Mammary epithelial cell (primary cell): ENCODE measurements at regions of chr19 and their contacts with region 1.

Region 1: DNA sequence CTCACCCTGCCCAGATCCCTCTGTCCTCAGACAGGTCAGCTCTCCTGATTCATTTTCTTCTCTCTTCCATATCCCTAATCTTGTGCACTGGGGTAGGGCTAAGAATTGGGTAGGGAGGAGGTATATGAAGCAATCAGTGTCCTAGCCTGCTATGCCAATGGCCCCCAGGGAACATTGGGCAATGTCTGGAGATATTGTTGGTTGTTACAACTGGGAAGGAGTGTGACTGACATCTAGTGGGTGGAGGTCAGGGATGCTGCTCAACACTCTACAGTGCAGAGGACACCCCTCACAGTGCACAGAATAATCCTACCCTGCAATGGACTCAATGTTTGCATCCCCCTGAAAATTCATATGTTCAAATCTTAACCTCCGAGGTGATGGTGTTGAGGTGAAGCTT is 57.5 kb downstream of the CPAMD8 start:
- DNase-seq: peak; percentile 45
- H3K4me3 ChIP-seq: no peak overlapping the region
- H3K27ac ChIP-seq: no peak overlapping the region
- H3K4me1 ChIP-seq: no peaks in the 10 kb centered on the region
- H3K27me3 ChIP-seq: no peaks in the 10 kb centered on the region
- CTCF ChIP-seq: peak; percentile 46 to 80

Region 2: DNA sequence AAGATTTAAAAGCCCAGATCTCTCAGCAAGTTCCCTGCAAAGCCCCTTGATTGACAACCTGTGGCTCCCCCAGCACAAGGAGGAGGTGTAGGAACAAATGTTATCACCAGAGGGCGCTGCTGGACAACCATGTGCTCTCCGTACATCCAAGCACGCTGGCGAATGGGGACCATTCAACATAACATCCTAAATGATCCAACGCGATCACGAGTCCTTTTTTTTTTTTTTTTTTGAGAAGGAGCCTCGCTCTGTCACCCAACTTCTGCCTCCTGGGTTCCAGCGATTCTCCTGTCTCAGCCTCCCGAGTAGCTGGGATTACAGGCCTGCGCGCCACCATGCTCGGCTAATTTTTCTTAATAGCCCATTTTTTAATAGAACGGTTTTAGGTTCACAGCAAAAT is 197.5 kb before region 1 on chr19:
- CTCF ChIA-PET with region 1: no interaction called
- dilution Hi-C with region 1: no loop called
- in situ Hi-C with region 1: no loop called
- intact Hi-C with region 1: loop called (anchors 1 kb)
- DNase-seq: peak; percentile 55
- H3K4me3 ChIP-seq: no peak overlapping the region
- H3K27ac ChIP-seq: no peak overlapping the region
- H3K4me1 ChIP-seq: peaks cover 3% of the 10 kb centered on the region
- H3K27me3 ChIP-seq: no peaks in the 10 kb centered on the region
- CTCF ChIP-seq: peak; percentile 81 to 86

Region 3: GRCh38 chr19:16778796-16779411 is 190.2 kb before region 1 on chr19:
- CTCF ChIA-PET with region 1: no interaction called
- dilution Hi-C with region 1: no loop called
- in situ Hi-C with region 1: no loop called
- intact Hi-C with region 1: loop called (anchors 1 kb)
- DNase-seq: peak; percentile 40
- H3K4me3 ChIP-seq: no peak overlapping the region
- H3K27ac ChIP-seq: no peak overlapping the region
- H3K4me1 ChIP-seq: no peaks in the 10 kb centered on the region
- H3K27me3 ChIP-seq: no peaks in the 10 kb centered on the region
- CTCF ChIP-seq: peak; percentile 58 to 87

Region 4: GRCh38 chr19:16791960-16792359 is 177.2 kb before region 1 on chr19:
- CTCF ChIA-PET with region 1: no interaction called
- dilution Hi-C with region 1: loop called (anchors 5 kb)
- in situ Hi-C with region 1: no loop called
- intact Hi-C with region 1: no loop called
- DNase-seq: no peak
- H3K4me3 ChIP-seq: no peak overlapping the region
- H3K27ac ChIP-seq: no peak overlapping the region
- H3K4me1 ChIP-seq: no peaks in the 10 kb centered on the region
- H3K27me3 ChIP-seq: no peaks in the 10 kb centered on the region
- CTCF ChIP-seq: no peak

Region 5: DNA sequence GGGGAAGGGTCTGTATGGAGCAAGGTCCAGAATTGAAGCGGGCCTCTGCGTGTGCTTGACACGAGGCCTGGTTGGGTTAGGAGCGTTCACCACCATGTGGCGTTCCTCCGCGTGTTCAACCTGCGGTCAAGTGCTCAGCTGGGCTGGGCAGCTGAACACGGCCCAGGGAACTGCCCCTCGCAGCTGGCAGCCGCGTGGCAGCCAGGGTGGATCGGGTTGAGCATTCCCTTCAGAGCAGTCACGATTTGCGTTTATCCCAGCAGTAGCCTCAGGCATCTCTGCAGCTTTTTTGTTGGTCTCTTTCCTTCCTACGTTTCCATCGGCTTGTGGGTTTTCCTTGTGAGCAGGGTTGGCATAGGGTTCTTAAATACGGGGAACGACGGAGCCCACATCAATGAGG is 109.0 kb before region 1 on chr19:
- CTCF ChIA-PET with region 1: no interaction called
- dilution Hi-C with region 1: loop called (anchors 5 kb)
- in situ Hi-C with region 1: no loop called
- intact Hi-C with region 1: no loop called
- DNase-seq: no peak
- H3K4me3 ChIP-seq: no peak overlapping the region
- H3K27ac ChIP-seq: no peak overlapping the region
- H3K4me1 ChIP-seq: no peaks in the 10 kb centered on the region
- H3K27me3 ChIP-seq: no peaks in the 10 kb centered on the region
- CTCF ChIP-seq: no peak

Region 6: DNA sequence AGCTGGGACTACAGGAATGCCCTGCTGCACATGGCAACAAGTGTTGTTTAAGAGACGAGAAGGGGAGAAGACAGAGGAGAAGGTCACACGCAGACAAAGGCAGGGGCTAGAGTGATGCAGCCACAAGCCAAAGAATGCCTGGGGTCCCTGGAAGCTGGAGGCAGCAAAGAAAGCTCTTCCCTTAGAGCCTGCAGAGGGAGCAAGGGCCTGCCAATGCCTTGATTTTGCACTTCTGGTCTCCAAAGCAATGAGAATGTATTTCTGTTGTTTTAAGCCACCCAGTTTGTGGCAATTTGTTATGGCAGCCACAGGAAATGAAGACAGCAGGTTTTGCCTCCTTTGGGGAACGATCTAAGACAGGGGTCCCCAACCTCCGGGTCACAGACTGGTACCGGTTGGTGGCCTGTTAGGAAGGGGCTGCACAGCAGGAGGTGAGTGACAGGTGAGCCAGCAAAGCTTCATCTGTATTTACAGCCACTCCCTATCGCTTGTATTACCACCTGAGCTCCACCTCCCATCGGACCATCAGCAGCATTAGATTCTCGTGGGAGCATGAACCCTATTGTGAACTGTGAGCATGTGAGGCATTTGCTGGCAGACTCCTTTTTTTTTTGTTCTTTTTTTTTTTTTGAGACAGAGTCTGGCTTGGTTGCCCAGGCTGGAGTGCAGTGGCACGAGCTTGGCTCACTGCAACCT is 58.2 kb before region 1 on chr19:
- CTCF ChIA-PET with region 1: no interaction called
- dilution Hi-C with region 1: loop called (anchors 5 kb)
- in situ Hi-C with region 1: no loop called
- intact Hi-C with region 1: no loop called
- DNase-seq: no peak
- H3K4me3 ChIP-seq: no peak overlapping the region
- H3K27ac ChIP-seq: no peak overlapping the region
- H3K4me1 ChIP-seq: no peaks in the 10 kb centered on the region
- H3K27me3 ChIP-seq: peaks cover 3% of the 10 kb centered on the region
- CTCF ChIP-seq: peak in 1 of 2 donors; percentile 38

Region 7: DNA sequence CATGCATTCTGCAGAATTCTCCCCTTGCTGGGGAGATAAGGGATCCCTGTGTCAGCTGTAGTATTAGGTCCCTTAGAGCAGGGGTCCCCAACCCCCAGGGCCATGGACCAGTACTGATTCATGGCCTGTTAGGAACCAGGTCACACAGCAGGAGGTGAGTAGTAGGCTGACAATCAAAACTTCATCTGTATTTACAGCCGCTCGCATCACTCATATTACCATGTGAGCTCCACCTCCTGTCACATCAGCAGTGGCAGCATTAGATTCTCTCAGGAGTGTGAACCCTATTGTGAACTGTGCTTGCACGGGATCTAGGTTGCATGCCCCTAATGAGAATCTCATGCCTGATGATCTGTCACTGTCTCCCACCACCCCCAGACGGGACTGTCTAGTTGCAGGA is 19.5 kb after region 1 on chr19:
- CTCF ChIA-PET with region 1: no interaction called
- dilution Hi-C with region 1: no loop called
- in situ Hi-C with region 1: no loop called
- intact Hi-C with region 1: no loop called
- DNase-seq: no peak
- H3K4me3 ChIP-seq: no peak overlapping the region
- H3K27ac ChIP-seq: no peak overlapping the region
- H3K4me1 ChIP-seq: no peaks in the 10 kb centered on the region
- H3K27me3 ChIP-seq: no peaks in the 10 kb centered on the region
- CTCF ChIP-seq: no peak

Region 8: GRCh38 chr19:17035842-17036424 is 66.8 kb after region 1 on chr19:
- CTCF ChIA-PET with region 1: no interaction called
- dilution Hi-C with region 1: loop called (anchors 5 kb)
- in situ Hi-C with region 1: no loop called
- intact Hi-C with region 1: no loop called
- DNase-seq: no peak
- H3K4me3 ChIP-seq: no peak overlapping the region
- H3K27ac ChIP-seq: no peak overlapping the region
- H3K4me1 ChIP-seq: no peaks in the 10 kb centered on the region
- H3K27me3 ChIP-seq: no peaks in the 10 kb centered on the region
- CTCF ChIP-seq: no peak